GM12878 (cell line): ENCODE measurements at regions of chr20 and their contacts with region 1.

Region 1: GRCh38 chr20:36861875-36862801 is 13.8 kb upstream of the TLDC2 start:
- DNase-seq: no peak
- ATAC-seq: no peak
- H3K4me3 ChIP-seq: peak overlapping the region; percentile 80
- H3K27ac ChIP-seq: no peak overlapping the region
- H3K4me1 ChIP-seq: peaks cover 26% of the 10 kb centered on the region
- H3K27me3 ChIP-seq: no peaks in the 10 kb centered on the region
- CTCF ChIP-seq: no peak
- EP300 ChIP-seq: no peak
- POLR2A ChIP-seq: no peak
- RAD21 ChIP-seq: no peak

Region 2: DNA sequence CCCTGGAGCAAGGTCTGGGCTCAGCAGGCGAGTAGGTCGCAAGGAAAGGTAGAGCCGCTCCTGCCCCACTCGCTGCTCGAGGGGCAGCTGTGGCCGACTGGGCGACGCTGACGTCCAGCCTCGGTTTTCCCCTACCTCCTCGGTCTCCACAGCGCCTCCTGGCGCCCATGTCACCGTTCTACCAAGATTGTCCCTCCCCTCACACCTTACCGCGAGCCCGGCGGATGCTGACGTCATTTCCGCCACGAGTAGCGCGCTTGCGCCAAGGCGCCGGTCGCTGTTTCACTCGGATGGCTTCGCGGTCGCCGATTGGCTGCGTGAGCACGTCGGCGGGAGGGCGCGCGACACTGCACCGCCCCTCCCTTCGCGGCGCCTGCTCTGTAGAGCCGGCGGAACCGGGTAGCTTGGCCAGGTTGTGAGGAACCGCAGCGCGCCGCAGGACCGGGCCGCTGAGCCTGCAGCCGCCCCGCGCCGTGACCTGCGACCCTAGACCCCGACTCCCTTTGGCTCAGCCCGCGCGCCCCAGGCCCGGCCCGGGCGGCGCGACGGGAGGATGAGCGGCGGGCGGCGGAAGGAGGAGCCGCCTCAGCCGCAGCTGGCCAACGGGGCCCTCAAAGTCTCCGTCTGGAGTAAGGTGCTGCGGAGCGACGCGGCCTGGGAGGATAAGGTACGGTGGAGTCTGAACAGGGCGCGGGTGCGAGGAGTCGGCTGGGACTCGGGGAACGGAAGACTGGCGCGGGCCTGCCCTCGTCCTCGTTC is 256.6 kb before region 1 on chr20 and contains the start of gene RAB5IF:
- CTCF ChIA-PET with region 1: interaction called, 6 read pairs
- POLR2A ChIA-PET with region 1: interaction called, 3 read pairs
- RAD21 ChIA-PET with region 1: interaction called, 3 read pairs
- SMC1A ChIA-PET with region 1: interaction called, 3 read pairs
- in situ Hi-C with region 1: no loop called
- intact Hi-C with region 1: loop called (anchors 10 kb)
- DNase-seq: peak; percentile 99
- ATAC-seq: peak; percentile 92
- H3K4me3 ChIP-seq: peak within 1 kb of the TSS; percentile 98
- H3K27ac ChIP-seq: peak within 1 kb of the TSS; percentile 97
- H3K4me1 ChIP-seq: peaks cover 20% of the 10 kb centered on the region
- H3K27me3 ChIP-seq: no peaks in the 10 kb centered on the region
- CTCF ChIP-seq: peak; percentile 94 to 99 (median 96); a peak in 5 of 6 replicates
- EP300 ChIP-seq: peak in 1 of 2 experiments; percentile 54; a peak in 1 of 4 replicates
- POLR2A ChIP-seq: peak; percentile 96
- RAD21 ChIP-seq: peak; percentile 61
- polyA plus RNA-seq, gene RAB5IF: 19.4 to 62.9 TPM

Region 3: DNA sequence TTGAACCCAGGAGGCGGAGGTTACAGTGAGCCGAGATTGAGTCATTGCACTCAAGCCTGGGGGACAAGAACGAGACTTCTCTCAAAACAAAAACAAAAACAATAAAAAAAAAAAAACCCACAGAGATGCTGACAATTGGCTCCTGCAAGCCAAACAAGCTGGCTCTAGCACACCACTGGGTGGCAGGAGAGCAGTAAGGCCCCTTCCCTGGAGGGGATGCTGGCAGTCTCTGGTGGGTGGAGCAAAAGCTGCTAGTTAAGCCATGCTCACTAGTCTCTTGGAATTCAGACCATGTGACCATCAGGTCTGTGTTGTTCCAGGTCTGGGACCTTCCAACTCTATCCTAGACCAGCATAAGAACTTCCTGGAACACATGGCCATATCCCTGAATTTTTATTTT is 69.7 kb before region 1 on chr20:
- CTCF ChIA-PET with region 1: no interaction called
- POLR2A ChIA-PET with region 1: no interaction called
- RAD21 ChIA-PET with region 1: interaction called, 5 read pairs
- SMC1A ChIA-PET with region 1: interaction called, 3 read pairs
- in situ Hi-C with region 1: no loop called
- intact Hi-C with region 1: loop called (anchors 1 kb)
- DNase-seq: no peak
- ATAC-seq: peak; percentile 87
- H3K4me3 ChIP-seq: no peak overlapping the region
- H3K27ac ChIP-seq: no peak overlapping the region
- H3K4me1 ChIP-seq: peaks cover 7% of the 10 kb centered on the region; the same call in 1 of the 2 replicates
- H3K27me3 ChIP-seq: no peaks in the 10 kb centered on the region
- CTCF ChIP-seq: peak; percentile 36 to 49 (median 47); a peak in 5 of 6 replicates
- EP300 ChIP-seq: no peak
- POLR2A ChIP-seq: no peak
- RAD21 ChIP-seq: peak; percentile 57

Region 4: GRCh38 chr20:36847009-36847709 is 15.0 kb before region 1 on chr20:
- CTCF ChIA-PET with region 1: interaction called, 349 read pairs
- POLR2A ChIA-PET with region 1: interaction called, 72 read pairs
- RAD21 ChIA-PET with region 1: interaction called, 215 read pairs
- SMC1A ChIA-PET with region 1: interaction called, 105 read pairs
- in situ Hi-C with region 1: no loop called
- intact Hi-C with region 1: no loop called
- DNase-seq: no peak
- ATAC-seq: no peak
- H3K4me3 ChIP-seq: no peak overlapping the region
- H3K27ac ChIP-seq: no peak overlapping the region
- H3K4me1 ChIP-seq: peaks cover 80% of the 10 kb centered on the region
- H3K27me3 ChIP-seq: no peaks in the 10 kb centered on the region
- CTCF ChIP-seq: no peak
- EP300 ChIP-seq: no peak
- POLR2A ChIP-seq: no peak
- RAD21 ChIP-seq: no peak

Region 5: GRCh38 chr20:36881888-36882287 is 19.8 kb after region 1 on chr20:
- CTCF ChIA-PET with region 1: interaction called, 26 read pairs
- POLR2A ChIA-PET with region 1: interaction called, 13 read pairs
- RAD21 ChIA-PET with region 1: interaction called, 17 read pairs
- SMC1A ChIA-PET with region 1: interaction called, 52 read pairs
- in situ Hi-C with region 1: no loop called
- intact Hi-C with region 1: no loop called
- DNase-seq: no peak
- ATAC-seq: peak; percentile 93
- H3K4me3 ChIP-seq: no peak overlapping the region
- H3K27ac ChIP-seq: no peak overlapping the region
- H3K4me1 ChIP-seq: peaks cover 7% of the 10 kb centered on the region
- H3K27me3 ChIP-seq: no peaks in the 10 kb centered on the region; a peak in 1 of 4 replicates
- CTCF ChIP-seq: no peak
- EP300 ChIP-seq: no peak
- POLR2A ChIP-seq: no peak
- RAD21 ChIP-seq: no peak